PC-9 (cell line): ENCODE measurements at regions of chrX and their contacts with region 1.

Region 1: DNA sequence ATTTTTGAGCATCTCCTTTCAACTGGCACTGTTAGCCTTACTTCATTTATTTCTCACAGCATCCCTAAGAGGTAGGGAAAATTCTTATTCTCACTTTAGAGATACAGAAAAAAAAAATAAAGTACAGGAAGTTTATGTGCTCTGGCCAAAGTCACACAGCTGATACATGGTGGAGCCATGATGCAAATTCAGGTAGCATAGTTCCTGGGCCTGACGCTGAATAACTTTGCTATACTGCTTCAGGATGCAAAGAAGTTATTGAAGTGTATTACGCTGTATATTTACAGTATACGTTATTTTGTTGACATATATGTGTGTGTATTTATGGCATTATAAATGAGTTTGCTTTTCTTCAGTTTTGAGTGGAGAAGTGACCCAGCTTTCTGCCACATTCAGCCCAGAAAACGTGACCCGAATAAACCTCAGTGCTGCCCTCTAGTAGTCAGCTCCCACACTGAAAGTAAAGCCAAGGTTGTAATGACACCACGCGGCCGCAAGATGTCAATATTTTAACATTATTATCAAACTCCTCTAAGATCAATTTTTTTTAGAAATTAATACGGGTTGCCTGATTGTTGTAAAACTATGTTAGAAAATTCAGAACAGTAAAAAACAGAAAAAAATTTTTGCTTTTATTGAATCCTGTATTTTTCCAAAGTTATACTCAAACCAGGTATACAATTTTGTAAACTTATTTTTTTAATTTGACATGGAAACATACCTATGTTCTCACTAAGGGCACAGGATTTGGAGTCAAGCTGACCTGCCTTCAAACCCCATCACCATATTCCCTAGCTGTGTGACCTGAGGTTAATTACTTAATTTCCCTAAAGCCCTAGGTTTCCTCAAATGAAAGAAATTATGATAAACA is 3.8 kb upstream of the GUCY2F start:
- DNase-seq: peak; percentile 49 to 60
- H3K4me3 ChIP-seq: no peak overlapping the region
- H3K27ac ChIP-seq: no peak overlapping the region
- H3K4me1 ChIP-seq: no peaks in the 10 kb centered on the region
- H3K27me3 ChIP-seq: peaks cover 7% of the 10 kb centered on the region; the same call in 1 of the 2 replicates
- CTCF ChIP-seq: peak; percentile 99

Region 2: GRCh38 chrX:108699368-108699767 is 786.3 kb before region 1 on chrX:
- CTCF ChIA-PET with region 1: no interaction called
- POLR2A ChIA-PET with region 1: no interaction called
- intact Hi-C with region 1: loop called (anchors 5 kb)
- DNase-seq: no peak
- H3K4me3 ChIP-seq: no peak overlapping the region
- H3K27ac ChIP-seq: no peak overlapping the region
- H3K4me1 ChIP-seq: peaks cover 9% of the 10 kb centered on the region; the same call in 1 of the 2 replicates
- H3K27me3 ChIP-seq: no peaks in the 10 kb centered on the region
- CTCF ChIP-seq: peak; percentile 65

Region 3: GRCh38 chrX:109714340-109714958 is 228.7 kb after region 1 on chrX:
- CTCF ChIA-PET with region 1: no interaction called
- POLR2A ChIA-PET with region 1: no interaction called
- intact Hi-C with region 1: loop called (anchors 5 kb)
- DNase-seq: peak; percentile 23 to 87
- H3K4me3 ChIP-seq: no peak overlapping the region
- H3K27ac ChIP-seq: peak overlapping the region; percentile 79
- H3K4me1 ChIP-seq: peaks cover 40% of the 10 kb centered on the region
- H3K27me3 ChIP-seq: no peaks in the 10 kb centered on the region
- CTCF ChIP-seq: no peak

Region 4: GRCh38 chrX:110146521-110146920 is 660.8 kb after region 1 on chrX:
- CTCF ChIA-PET with region 1: no interaction called
- POLR2A ChIA-PET with region 1: no interaction called
- intact Hi-C with region 1: loop called (anchors 5 kb)
- DNase-seq: peak in 1 of 2 experiments; percentile 32
- H3K4me3 ChIP-seq: no peak overlapping the region
- H3K27ac ChIP-seq: no peak overlapping the region
- H3K4me1 ChIP-seq: no peaks in the 10 kb centered on the region
- H3K27me3 ChIP-seq: no peaks in the 10 kb centered on the region
- CTCF ChIP-seq: peak; percentile 78